SK-N-SH (cell line): ENCODE measurements at regions of chr2 and their contacts with region 1.

Region 1: DNA sequence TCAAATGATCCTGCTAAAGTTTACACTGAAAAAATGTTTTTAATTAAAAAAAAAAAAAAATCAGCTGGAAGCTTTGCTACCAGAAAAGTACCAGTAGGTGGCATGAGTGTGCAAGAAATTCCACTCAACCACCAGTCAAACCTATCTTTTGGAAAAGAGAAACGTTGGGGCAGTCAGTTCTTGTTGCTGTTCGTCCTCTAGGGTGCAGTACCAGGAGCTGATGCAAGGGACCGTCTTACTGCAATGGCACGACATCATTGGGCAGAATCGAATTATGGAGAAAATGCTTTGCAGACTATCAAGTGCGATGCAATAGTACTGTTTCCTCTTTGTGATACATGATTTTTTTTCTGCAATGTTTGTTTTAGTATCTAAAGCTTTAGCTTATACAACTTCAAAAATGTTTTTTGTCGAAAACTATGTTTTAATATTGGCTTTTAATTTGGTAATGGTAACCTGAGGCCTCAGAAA is 18.3 kb downstream of the YPEL5 start:
- DNase-seq: peak; percentile 88
- H3K4me3 ChIP-seq: no peak overlapping the region; a peak in 1 of 4 replicates
- H3K27ac ChIP-seq: no peak overlapping the region
- H3K4me1 ChIP-seq: peaks cover 2 to 9% of the 10 kb centered on the region in 2 experiments; a peak in 3 of 4 replicates
- H3K27me3 ChIP-seq: no peaks in the 10 kb centered on the region
- CTCF ChIP-seq: peak; percentile 99
- EP300 ChIP-seq: peak in 1 of 2 experiments; percentile 26; a peak in 1 of 4 replicates
- RAD21 ChIP-seq: peak; percentile 97

Region 2: DNA sequence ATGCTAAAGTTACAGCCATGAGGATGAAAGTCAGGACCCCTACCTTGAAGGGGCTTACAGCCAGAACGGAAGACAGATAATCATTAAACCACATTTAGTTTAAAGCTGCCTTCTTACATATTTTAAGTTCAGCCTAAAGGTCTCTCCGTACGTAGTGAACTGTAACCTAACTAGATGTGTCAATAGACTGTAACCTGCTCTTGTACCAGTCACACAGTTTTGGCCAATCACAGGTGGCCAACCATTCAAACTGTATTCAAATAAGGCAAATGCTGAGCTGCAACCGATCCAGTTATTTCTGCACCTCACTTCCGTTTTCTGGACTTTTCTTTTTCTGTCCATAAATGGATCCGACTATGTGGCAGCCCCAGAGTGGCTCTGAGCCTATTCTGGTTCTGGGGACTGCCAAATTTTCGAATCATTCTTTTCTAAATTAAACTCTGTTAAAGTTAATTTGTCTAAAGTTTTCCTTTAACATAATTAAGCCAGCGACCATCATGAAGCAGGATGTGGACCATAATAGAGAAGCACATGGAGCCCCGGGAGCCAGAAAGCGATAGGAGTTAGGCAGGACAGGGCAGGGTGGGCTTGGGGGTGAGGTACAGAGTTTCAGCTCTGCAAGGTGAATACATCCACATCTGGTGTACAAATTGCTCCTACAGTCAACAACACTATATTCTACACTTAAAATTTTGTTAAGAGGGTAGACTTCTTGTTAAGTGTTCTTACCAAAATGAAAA is 66.6 kb before region 1 on chr2:
- CTCF ChIA-PET with region 1: no interaction called
- POLR2A ChIA-PET with region 1: no interaction called
- DNase-seq: no peak
- H3K4me3 ChIP-seq: no peak overlapping the region
- H3K27ac ChIP-seq: no peak overlapping the region
- H3K4me1 ChIP-seq: peaks cover 0 to 11% of the 10 kb centered on the region in 2 experiments; a peak in 1 of 4 replicates
- H3K27me3 ChIP-seq: no peaks in the 10 kb centered on the region
- CTCF ChIP-seq: no peak
- EP300 ChIP-seq: no peak
- RAD21 ChIP-seq: no peak

Region 3: DNA sequence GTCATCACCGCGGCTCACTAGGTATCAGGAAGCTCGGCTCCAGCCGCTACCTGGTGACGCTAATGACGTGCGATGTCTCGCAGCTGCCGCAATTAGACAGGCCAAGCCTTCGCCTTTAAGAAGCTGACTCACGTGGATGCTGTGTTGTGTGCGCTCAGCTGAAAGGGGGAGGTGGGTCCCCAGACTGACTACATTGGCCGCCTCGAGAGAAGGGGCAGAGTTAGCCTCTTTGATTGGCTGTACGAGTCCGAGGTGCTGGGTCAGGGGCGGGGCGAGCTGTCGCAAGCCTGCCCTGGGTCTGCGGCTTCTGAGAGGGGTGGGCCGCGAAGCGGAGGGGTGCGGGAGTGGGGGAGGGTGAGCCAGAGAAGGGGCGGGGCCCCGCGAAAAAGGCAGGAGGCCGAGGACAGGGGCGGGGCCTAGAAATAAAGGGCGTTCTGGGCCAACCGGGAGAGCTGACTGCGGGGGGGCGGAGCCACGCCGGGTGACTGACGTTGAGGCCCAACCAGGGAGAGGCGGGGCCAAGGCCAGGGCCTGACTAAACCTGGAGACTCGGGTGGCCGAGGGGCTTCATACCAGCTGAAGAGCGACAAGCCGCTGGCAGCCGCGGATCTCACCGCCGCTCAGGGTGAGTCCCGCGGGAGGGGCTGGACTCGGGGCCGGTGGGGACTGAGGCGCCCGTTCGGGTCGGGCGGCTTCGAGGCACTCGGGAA is 18.5 kb before region 1 on chr2 and contains the start of gene YPEL5:
- CTCF ChIA-PET with region 1: interaction called, 126 read pairs
- POLR2A ChIA-PET with region 1: interaction called, 6 read pairs
- DNase-seq: peak; percentile 99
- H3K4me3 ChIP-seq: peak within 1 kb of the TSS; percentile 82 to 99
- H3K27ac ChIP-seq: peak within 1 kb of the TSS; percentile 86 to 91
- H3K4me1 ChIP-seq: peaks cover 26 to 37% of the 10 kb centered on the region in 2 experiments; a peak in 3 of 4 replicates
- H3K27me3 ChIP-seq: no peaks in the 10 kb centered on the region
- CTCF ChIP-seq: no peak
- EP300 ChIP-seq: no peak
- RAD21 ChIP-seq: no peak
- polyA plus RNA-seq, gene YPEL5: 60.5 and 81.6 TPM in 2 replicates

Region 4: DNA sequence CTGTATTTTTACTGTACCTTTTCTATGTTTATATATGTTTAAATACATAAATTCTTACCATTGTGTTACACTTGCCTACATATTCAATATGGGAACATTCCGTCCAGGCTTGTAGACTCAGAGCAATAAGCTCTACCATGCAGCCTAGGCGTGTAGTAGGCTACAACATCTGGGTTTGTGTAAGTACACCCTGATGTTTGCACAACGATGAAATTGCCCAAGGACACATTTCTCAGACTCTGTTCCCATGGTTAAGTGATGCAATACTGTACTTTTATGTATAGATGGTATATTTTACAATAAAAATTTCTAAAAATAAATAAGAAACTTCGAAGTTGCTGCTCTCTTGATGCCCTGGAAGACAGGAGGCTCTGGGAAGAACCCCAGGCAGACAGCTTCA is 20.1 kb after region 1 on chr2:
- CTCF ChIA-PET with region 1: interaction called, 50 read pairs
- POLR2A ChIA-PET with region 1: interaction called, 3 read pairs
- DNase-seq: no peak
- H3K4me3 ChIP-seq: no peak overlapping the region
- H3K27ac ChIP-seq: no peak overlapping the region
- H3K4me1 ChIP-seq: no peaks in the 10 kb centered on the region
- H3K27me3 ChIP-seq: peaks cover 12% of the 10 kb centered on the region; the same call in 1 of the 2 replicates
- CTCF ChIP-seq: no peak
- EP300 ChIP-seq: no peak
- RAD21 ChIP-seq: no peak

Region 5: DNA sequence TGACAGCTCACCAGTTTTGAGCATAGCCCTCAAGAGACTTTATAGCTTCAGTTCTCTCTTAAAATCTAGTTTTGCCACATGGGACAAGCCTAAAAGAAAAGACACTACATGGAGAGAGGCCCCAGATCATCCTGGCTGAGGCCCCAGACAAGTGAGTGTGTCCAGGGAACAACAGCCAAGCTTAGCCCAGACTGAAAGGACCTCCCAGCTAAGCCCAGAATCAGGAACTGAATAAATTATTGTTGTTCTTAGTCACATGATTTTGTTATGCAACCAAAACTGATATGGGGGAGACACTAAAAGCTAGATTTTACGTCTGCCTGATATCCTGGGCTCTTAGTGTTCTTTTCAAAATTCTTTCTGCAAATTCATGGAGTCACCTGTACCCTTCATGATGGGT is 36.9 kb after region 1 on chr2:
- CTCF ChIA-PET with region 1: interaction called, 189 read pairs
- POLR2A ChIA-PET with region 1: interaction called, 4 read pairs
- DNase-seq: no peak
- H3K4me3 ChIP-seq: no peak overlapping the region
- H3K27ac ChIP-seq: no peak overlapping the region
- H3K4me1 ChIP-seq: peaks cover 0 to 11% of the 10 kb centered on the region in 2 experiments; a peak in 2 of 4 replicates
- H3K27me3 ChIP-seq: no peaks in the 10 kb centered on the region; the same call in 1 of the 2 replicates
- CTCF ChIP-seq: no peak
- EP300 ChIP-seq: no peak
- RAD21 ChIP-seq: no peak

Region 6: DNA sequence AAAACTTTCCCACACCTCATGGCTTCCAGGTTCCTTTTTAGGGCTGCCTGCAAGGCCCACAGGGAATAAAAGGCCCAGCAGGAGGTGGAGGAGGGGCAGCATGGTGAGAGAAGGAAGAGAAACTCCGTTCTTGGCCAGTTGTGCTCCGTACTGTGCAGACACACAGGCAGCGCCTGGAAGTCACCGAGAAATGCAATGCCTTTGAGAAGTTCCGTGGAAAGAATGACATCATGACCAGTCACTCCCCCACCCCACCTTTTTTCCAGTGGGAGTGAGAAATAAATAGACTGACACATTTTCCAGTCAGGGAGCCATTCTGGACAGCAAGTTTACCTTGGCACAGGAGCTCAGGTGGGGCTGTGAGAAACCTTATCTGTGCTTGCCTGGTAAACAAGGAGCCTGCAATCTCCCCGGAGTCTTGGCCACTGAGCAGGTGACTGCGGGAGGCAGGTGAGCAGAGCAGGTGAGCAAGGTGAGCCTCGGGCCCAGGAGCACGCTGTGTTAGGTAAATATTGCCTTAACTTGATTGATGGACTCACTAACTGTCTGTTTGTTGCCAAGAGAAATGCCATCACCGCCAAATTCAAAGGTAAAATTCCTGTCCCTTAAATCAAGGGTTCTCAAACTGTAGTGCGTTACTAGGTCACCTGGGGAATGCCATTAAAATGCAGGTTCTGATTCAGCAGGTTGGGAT is 52.7 kb after region 1 on chr2:
- CTCF ChIA-PET with region 1: interaction called, 20 read pairs
- POLR2A ChIA-PET with region 1: no interaction called
- DNase-seq: no peak
- H3K4me3 ChIP-seq: no peak overlapping the region
- H3K27ac ChIP-seq: no peak overlapping the region
- H3K4me1 ChIP-seq: peaks cover 0 to 3% of the 10 kb centered on the region in 2 experiments; a peak in 2 of 4 replicates
- H3K27me3 ChIP-seq: no peaks in the 10 kb centered on the region
- CTCF ChIP-seq: no peak
- EP300 ChIP-seq: no peak
- RAD21 ChIP-seq: no peak

Region 7: GRCh38 chr2:30231212-30231995 is 66.3 kb after region 1 on chr2 and contains the start of gene LBH:
- CTCF ChIA-PET with region 1: interaction called, 19 read pairs
- POLR2A ChIA-PET with region 1: no interaction called
- DNase-seq: peak; percentile 98
- H3K4me3 ChIP-seq: peak within 1 kb of the TSS; percentile 73 to 92
- H3K27ac ChIP-seq: peak within 1 kb of the TSS; percentile 43 to 62; a peak in 3 of 4 replicates
- H3K4me1 ChIP-seq: peaks cover under 1 to 22% of the 10 kb centered on the region in 2 experiments; a peak in 2 of 4 replicates
- H3K27me3 ChIP-seq: no peaks in the 10 kb centered on the region
- CTCF ChIP-seq: no peak
- EP300 ChIP-seq: peak in 1 of 2 experiments; percentile 11; a peak in 1 of 4 replicates
- RAD21 ChIP-seq: no peak
- polyA plus RNA-seq, gene LBH: 22.8 and 26.4 TPM in 2 replicates

Region 8: DNA sequence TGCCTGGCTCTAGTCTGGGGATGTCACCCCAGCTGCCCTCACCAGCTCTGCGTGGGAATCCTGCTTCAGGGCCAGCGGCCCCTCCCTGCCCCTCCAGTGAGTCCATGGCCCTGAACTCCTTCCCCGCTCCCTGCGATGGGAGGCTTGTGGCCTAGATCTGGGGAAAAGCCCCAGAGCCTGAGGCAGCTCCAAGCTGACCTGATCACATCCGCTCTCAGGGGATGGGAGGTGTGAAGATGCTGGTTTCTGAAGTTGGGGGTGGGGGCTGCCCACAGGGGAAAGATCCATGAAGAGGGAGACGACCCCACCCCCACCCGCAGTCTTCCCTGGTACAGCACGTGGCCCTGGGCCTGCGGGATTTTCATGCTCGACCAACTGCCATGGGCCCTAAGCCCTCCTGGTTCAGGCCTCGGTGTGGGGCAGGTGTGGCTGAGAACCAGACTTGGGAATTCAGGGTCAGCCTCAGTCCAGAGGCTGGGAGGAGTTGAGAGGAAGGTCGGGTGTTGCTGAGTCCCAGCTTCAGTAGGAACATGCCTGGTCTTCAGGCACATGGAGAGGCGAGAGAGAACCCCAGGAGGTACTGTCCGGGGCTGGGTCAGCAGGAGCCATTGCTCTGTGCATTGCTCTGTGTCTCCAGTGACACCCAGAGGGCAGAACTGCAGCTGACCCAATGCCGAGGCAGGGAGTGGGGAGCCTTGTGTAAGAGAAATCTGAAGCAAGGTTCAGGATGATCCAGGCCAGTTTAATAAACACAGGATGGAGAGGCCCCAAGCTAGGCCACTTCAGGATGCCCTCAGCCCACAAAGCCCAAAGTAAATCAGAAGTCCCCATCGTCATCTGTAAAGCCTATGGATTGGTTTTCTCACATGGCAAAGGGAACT is 527.1 kb after region 1 on chr2:
- CTCF ChIA-PET with region 1: interaction called, 46 read pairs
- POLR2A ChIA-PET with region 1: no interaction called
- DNase-seq: no peak
- H3K4me3 ChIP-seq: no peak overlapping the region
- H3K27ac ChIP-seq: no peak overlapping the region
- H3K4me1 ChIP-seq: peaks cover 0 to 15% of the 10 kb centered on the region in 2 experiments; a peak in 1 of 4 replicates
- H3K27me3 ChIP-seq: no peaks in the 10 kb centered on the region
- CTCF ChIP-seq: peak; percentile 29
- EP300 ChIP-seq: no peak
- RAD21 ChIP-seq: peak; percentile 51